Mammary epithelial cell (primary cell): ENCODE measurements at regions of chr17 and their contacts with region 1.

Region 1: GRCh38 chr17:16537130-16537458 is 31.9 kb downstream of the ZNF287 start:
- DNase-seq: no peak
- H3K4me3 ChIP-seq: no peak overlapping the region
- H3K27ac ChIP-seq: no peak overlapping the region
- H3K4me1 ChIP-seq: no peaks in the 10 kb centered on the region
- H3K27me3 ChIP-seq: no peaks in the 10 kb centered on the region
- CTCF ChIP-seq: no peak

Region 2: GRCh38 chr17:16463358-16464302 is 73.5 kb before region 1 on chr17:
- CTCF ChIA-PET with region 1: no interaction called
- dilution Hi-C with region 1: no loop called
- in situ Hi-C with region 1: no loop called
- intact Hi-C with region 1: no loop called
- DNase-seq: peak; percentile 35
- H3K4me3 ChIP-seq: no peak overlapping the region
- H3K27ac ChIP-seq: no peak overlapping the region
- H3K4me1 ChIP-seq: peaks cover 21% of the 10 kb centered on the region
- H3K27me3 ChIP-seq: no peaks in the 10 kb centered on the region
- CTCF ChIP-seq: peak; percentile 41 to 60

Region 3: DNA sequence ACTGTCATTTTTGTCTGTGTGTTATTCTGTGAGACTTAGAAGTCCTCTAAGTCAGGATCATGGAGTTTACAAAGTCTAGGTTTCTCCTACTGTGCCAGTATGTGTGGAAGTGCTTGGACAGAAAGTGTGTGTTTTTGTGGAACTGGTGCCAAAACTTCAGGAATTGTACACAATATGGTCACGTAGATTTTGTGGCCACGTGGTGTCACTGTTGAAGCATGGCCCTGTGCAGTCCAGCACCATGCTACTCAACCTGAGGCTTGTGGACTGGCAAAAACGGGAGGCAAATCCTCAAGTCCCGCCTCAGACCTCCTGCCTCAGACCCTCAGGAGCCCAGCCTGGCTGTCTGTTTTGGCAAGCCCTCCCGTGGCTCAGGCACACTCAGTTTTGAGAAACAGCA is 1629.8 kb after region 1 on chr17:
- CTCF ChIA-PET with region 1: no interaction called
- dilution Hi-C with region 1: no loop called
- in situ Hi-C with region 1: no loop called
- intact Hi-C with region 1: loop called (anchors 5 kb)
- DNase-seq: no peak
- H3K4me3 ChIP-seq: no peak overlapping the region
- H3K27ac ChIP-seq: no peak overlapping the region
- H3K4me1 ChIP-seq: no peaks in the 10 kb centered on the region
- H3K27me3 ChIP-seq: no peaks in the 10 kb centered on the region
- CTCF ChIP-seq: peak in 1 of 2 donors; percentile 3